ENCODE measurements at regions of chr2 and their contacts with region 1.

Region 1: GRCh38 chr2:215161301-215161829 is 22.9 kb upstream of the ABCA12 start:
- DNase-seq: no peak
- H3K4me3 Mint-ChIP-seq: no peak overlapping the region
- H3K27ac Mint-ChIP-seq: no peak overlapping the region
- H3K4me1 Mint-ChIP-seq: no peaks in the 10 kb centered on the region
- H3K27me3 Mint-ChIP-seq: no peaks in the 10 kb centered on the region
- CTCF ChIP-seq: no peak

Region 2: DNA sequence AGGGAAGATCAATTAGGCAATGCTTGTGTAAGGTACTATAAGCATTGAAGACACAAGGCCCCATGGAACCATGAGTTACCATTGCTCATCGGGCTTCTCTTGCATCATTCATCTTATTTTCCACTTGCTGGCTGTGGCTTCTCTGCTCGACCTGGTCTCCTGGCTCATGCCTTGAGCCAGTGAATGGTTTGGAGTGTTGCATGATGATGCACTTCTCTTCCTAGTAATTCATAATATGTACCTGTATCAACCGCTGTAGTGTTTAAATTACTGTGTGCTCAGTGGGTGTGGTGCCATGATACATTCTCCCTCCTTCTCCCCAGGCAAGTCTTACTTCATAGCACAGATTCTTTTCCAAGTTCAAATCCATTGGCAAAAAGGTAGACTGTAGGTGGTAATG is 89.7 kb before region 1 on chr2:
- CTCF ChIA-PET with region 1: no interaction called
- POLR2A ChIA-PET with region 1: no interaction called
- intact Hi-C with region 1: loop called (anchors 1 kb)
- DNase-seq: peak; percentile 80
- H3K4me3 Mint-ChIP-seq: no peak overlapping the region
- H3K27ac Mint-ChIP-seq: peak overlapping the region; percentile 68
- H3K4me1 Mint-ChIP-seq: peaks cover 9% of the 10 kb centered on the region
- H3K27me3 Mint-ChIP-seq: no peaks in the 10 kb centered on the region
- CTCF ChIP-seq: no peak

Region 3: GRCh38 chr2:215178121-215178520 is 16.8 kb after region 1 on chr2:
- CTCF ChIA-PET with region 1: no interaction called
- POLR2A ChIA-PET with region 1: no interaction called
- intact Hi-C with region 1: no loop called
- DNase-seq: no peak
- H3K4me3 Mint-ChIP-seq: no peak overlapping the region
- H3K27ac Mint-ChIP-seq: no peak overlapping the region
- H3K4me1 Mint-ChIP-seq: no peaks in the 10 kb centered on the region
- H3K27me3 Mint-ChIP-seq: no peaks in the 10 kb centered on the region
- CTCF ChIP-seq: no peak